AG04450 (cell line): ENCODE measurements at regions of chr5 and their contacts with region 1.

Region 1: GRCh38 chr5:154405078-154405792 is 40.6 kb upstream of the SAP30L start:
- DNase-seq: peak; percentile 43
- H3K4me3 ChIP-seq: peak overlapping the region; percentile 45
- H3K27ac ChIP-seq: no peak overlapping the region
- H3K27me3 ChIP-seq: no peaks in the 10 kb centered on the region
- CTCF ChIP-seq: peak; percentile 88

Region 2: GRCh38 chr5:154077696-154078095 is 327.5 kb before region 1 on chr5:
- CTCF ChIA-PET with region 1: interaction called, 97 read pairs
- POLR2A ChIA-PET with region 1: interaction called, 5 read pairs
- DNase-seq: no peak
- H3K4me3 ChIP-seq: no peak overlapping the region
- H3K27ac ChIP-seq: no peak overlapping the region
- H3K27me3 ChIP-seq: peaks cover 5% of the 10 kb centered on the region
- CTCF ChIP-seq: no peak

Region 3: GRCh38 chr5:154179846-154180710 is 225.2 kb before region 1 on chr5:
- CTCF ChIA-PET with region 1: interaction called, 76 read pairs
- POLR2A ChIA-PET with region 1: no interaction called
- DNase-seq: peak; percentile 33
- H3K4me3 ChIP-seq: no peak overlapping the region
- H3K27ac ChIP-seq: no peak overlapping the region
- H3K27me3 ChIP-seq: peaks cover 9% of the 10 kb centered on the region
- CTCF ChIP-seq: peak; percentile 93

Region 4: DNA sequence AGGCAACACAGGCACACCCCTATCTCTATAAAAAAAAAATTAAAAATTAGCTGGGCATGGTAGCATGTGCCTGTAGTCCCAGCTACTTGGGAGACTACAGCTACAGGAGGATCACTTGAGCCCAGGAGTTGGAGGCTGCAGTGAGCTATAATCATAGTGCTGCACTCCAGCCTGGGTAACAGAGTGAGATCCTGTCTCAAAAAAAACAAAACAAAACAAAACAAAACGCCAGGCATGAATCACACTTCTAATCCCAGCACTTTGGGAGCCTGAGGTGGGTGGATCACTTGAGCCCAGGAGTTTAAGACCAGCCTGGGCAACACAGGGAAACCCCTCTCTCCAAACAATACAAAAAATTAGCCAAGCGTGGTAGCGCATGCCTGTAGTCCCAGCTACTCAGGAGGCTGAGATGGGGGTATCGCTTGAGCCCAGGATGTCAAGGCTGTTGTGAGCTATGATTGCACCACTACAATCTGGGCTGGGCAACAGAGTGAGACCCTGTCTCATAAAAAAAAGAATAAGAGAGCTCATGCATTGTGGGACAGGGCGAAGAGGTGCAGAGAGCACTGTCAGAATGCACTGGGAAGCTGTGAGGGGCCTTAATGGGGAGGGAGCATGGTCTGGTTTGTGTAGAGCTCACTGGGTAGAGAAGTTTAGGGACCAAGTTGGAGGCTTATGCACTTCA is 32.2 kb after region 1 on chr5:
- CTCF ChIA-PET with region 1: no interaction called
- POLR2A ChIA-PET with region 1: no interaction called
- DNase-seq: no peak
- H3K4me3 ChIP-seq: no peak overlapping the region
- H3K27ac ChIP-seq: no peak overlapping the region
- H3K27me3 ChIP-seq: no peaks in the 10 kb centered on the region
- CTCF ChIP-seq: no peak

Region 5: DNA sequence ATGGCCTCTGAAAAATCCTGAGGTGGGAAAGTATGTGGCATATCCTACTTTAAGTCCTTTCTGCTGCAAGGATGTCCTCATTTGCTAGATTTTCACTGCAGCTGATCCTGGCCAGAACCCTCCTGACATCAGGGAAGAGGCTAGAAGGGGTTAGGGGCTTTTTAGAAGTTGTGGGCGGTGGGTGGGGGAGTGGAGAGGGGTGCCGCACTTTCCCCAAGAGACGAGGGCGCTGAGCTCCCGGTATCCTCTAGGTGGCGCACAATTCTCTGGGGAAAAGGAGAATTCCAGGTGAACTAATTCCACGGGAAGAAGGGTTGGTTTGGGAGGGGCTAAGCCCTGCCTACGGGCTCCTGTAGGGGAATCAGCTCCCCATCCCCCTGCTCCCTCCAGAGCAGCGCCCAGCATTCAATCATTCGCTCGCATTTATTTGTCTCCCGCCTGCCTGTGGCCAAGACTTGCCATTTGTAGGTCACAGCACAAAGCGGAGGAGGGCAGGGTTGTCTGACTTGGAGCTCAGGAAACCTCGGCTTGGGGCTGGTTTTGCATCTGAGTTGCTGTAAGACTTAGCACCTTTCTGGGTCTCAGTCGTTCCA is 115.7 kb after region 1 on chr5:
- CTCF ChIA-PET with region 1: no interaction called
- POLR2A ChIA-PET with region 1: no interaction called
- DNase-seq: no peak
- H3K4me3 ChIP-seq: no peak overlapping the region
- H3K27ac ChIP-seq: no peak overlapping the region
- H3K27me3 ChIP-seq: peaks cover 46% of the 10 kb centered on the region
- CTCF ChIP-seq: peak; percentile 75

Region 6: DNA sequence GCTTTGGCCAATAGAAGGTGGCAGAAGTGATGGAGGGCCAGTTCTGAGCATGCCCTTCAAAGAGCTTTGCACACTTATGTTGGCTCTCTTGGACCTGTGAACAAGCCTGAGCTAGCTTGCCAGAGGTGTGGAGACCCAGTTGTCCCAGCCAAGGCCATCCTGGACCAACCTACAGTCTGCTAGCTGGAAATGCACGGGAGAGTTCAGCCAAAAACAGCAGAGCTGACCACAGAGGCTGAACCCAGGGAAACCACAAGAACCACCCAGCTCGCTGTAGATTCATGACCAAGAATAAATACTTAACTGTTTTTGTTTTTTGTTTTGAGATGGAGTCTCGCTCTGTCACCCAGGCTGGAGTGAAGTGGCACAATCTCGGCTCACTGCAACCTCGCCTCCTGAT is 138.1 kb after region 1 on chr5:
- CTCF ChIA-PET with region 1: no interaction called
- POLR2A ChIA-PET with region 1: no interaction called
- DNase-seq: no peak
- H3K4me3 ChIP-seq: no peak overlapping the region
- H3K27ac ChIP-seq: no peak overlapping the region
- H3K27me3 ChIP-seq: peaks cover 22% of the 10 kb centered on the region
- CTCF ChIP-seq: no peak

Region 7: DNA sequence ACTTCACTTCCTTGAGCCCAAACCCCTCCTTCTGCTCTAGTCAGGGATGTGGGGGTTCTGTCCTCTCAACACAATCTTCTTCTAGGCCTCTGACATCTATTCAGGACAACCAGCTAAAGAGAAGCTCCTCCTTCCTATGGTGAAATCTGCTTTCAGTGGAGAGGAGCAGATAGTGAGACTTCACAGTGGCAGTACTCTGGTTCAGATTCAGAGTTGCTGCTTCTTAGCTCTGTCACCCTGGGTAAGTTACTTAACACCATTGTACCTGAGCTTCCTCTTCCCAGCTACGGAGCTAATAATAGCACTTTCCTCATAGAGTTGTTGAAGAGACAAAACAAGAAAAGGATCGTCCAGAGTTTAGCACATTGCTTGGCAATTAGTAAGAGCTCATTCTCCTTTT is 272.7 kb after region 1 on chr5:
- CTCF ChIA-PET with region 1: interaction called, 17 read pairs
- POLR2A ChIA-PET with region 1: no interaction called
- DNase-seq: no peak
- H3K4me3 ChIP-seq: no peak overlapping the region
- H3K27ac ChIP-seq: no peak overlapping the region
- H3K27me3 ChIP-seq: no peaks in the 10 kb centered on the region
- CTCF ChIP-seq: no peak

Region 8: DNA sequence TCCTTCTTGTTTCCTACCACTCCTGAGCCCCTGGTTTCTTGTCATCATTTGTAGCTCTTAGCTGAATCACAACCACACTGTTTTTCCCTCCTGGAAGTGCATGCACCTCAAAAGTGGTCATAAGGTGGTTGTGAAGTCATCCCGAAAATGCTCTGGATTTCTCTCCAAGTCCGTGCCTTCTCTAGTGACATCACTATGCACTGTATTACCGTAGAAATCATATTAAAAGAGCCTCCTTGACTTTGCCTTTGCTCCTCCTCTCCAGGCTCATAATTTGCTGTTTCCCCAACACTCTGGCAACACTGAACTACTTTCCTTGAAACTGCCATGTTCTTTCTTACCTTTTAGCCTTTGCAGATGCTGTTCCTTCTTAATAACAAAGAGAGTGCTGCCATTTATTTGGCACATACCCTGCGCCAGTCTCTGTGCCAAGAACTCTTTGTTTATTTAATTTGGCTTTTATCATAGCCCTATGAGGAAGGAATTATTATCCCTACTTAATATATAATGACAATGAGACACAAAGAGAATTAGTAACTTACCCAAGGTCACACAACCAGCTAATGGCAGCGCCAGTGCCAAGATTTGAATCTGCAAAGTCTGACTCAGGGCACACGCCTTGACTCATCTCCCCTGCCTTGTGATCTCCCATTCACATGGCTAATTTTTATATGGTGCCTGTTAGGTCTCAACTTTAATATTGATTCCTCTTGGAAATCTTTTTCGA is 723.7 kb after region 1 on chr5:
- CTCF ChIA-PET with region 1: no interaction called
- POLR2A ChIA-PET with region 1: no interaction called
- DNase-seq: no peak
- H3K4me3 ChIP-seq: no peak overlapping the region
- H3K27ac ChIP-seq: no peak overlapping the region
- H3K27me3 ChIP-seq: no peaks in the 10 kb centered on the region
- CTCF ChIP-seq: no peak